GM12878 (cell line): ENCODE measurements at regions of chr5 and their contacts with region 1.

Region 1: GRCh38 chr5:151126199-151126645 is 31.4 kb downstream of the ANXA6 start:
- DNase-seq: peak; percentile 66
- ATAC-seq: peak; percentile 65
- H3K4me3 ChIP-seq: no peak overlapping the region
- H3K27ac ChIP-seq: peak overlapping the region; percentile 75
- H3K4me1 ChIP-seq: peaks cover 65% of the 10 kb centered on the region
- H3K27me3 ChIP-seq: no peaks in the 10 kb centered on the region
- CTCF ChIP-seq: peak; percentile 84 to 92 (median 87)
- EP300 ChIP-seq: no peak
- POLR2A ChIP-seq: peak; percentile 50; the same call in 1 of the 2 replicates
- RAD21 ChIP-seq: peak; percentile 93

Region 2: GRCh38 chr5:151051066-151051930 is 74.9 kb before region 1 on chr5:
- CTCF ChIA-PET with region 1: interaction called, 691 read pairs
- POLR2A ChIA-PET with region 1: interaction called, 8 read pairs
- RAD21 ChIA-PET with region 1: interaction called, 23 read pairs
- SMC1A ChIA-PET with region 1: interaction called, 42 read pairs
- in situ Hi-C with region 1: loop called (anchors 5 kb)
- intact Hi-C with region 1: no loop called
- DNase-seq: peak; percentile 43
- ATAC-seq: peak; percentile 93
- H3K4me3 ChIP-seq: no peak overlapping the region
- H3K27ac ChIP-seq: no peak overlapping the region
- H3K4me1 ChIP-seq: no peaks in the 10 kb centered on the region; the same call in 1 of the 2 replicates
- H3K27me3 ChIP-seq: no peaks in the 10 kb centered on the region
- CTCF ChIP-seq: peak; percentile 86 to 87 (median 86)
- EP300 ChIP-seq: no peak
- POLR2A ChIP-seq: no peak
- RAD21 ChIP-seq: peak; percentile 91

Region 3: GRCh38 chr5:151086905-151087360 is 39.3 kb before region 1 on chr5:
- CTCF ChIA-PET with region 1: interaction called, 17 read pairs
- POLR2A ChIA-PET with region 1: interaction called, 30 read pairs
- RAD21 ChIA-PET with region 1: interaction called, 11 read pairs
- SMC1A ChIA-PET with region 1: interaction called, 16 read pairs
- in situ Hi-C with region 1: no loop called
- intact Hi-C with region 1: no loop called
- DNase-seq: no peak
- ATAC-seq: peak; percentile 79
- H3K4me3 ChIP-seq: peak overlapping the region; percentile 89
- H3K27ac ChIP-seq: peak overlapping the region; percentile 88
- H3K4me1 ChIP-seq: peaks cover 29% of the 10 kb centered on the region
- H3K27me3 ChIP-seq: no peaks in the 10 kb centered on the region
- CTCF ChIP-seq: no peak
- EP300 ChIP-seq: no peak
- POLR2A ChIP-seq: peak; percentile 89
- RAD21 ChIP-seq: no peak

Region 4: GRCh38 chr5:151150471-151151262 is 24.4 kb after region 1 on chr5:
- CTCF ChIA-PET with region 1: interaction called, 1,107 read pairs
- POLR2A ChIA-PET with region 1: interaction called, 153 read pairs
- RAD21 ChIA-PET with region 1: interaction called, 222 read pairs
- SMC1A ChIA-PET with region 1: interaction called, 1,132 read pairs
- in situ Hi-C with region 1: no loop called
- intact Hi-C with region 1: no loop called
- DNase-seq: peak; percentile 50
- ATAC-seq: peak; percentile 51
- H3K4me3 ChIP-seq: peak overlapping the region; percentile 57
- H3K27ac ChIP-seq: peak overlapping the region; percentile 89
- H3K4me1 ChIP-seq: peaks cover 62% of the 10 kb centered on the region
- H3K27me3 ChIP-seq: no peaks in the 10 kb centered on the region
- CTCF ChIP-seq: no peak
- EP300 ChIP-seq: no peak
- POLR2A ChIP-seq: peak; percentile 70
- RAD21 ChIP-seq: no peak

Region 5: GRCh38 chr5:151223469-151224264 is 97.4 kb after region 1 on chr5 and contains the start of gene CCDC69:
- CTCF ChIA-PET with region 1: interaction called, 30 read pairs
- POLR2A ChIA-PET with region 1: interaction called, 5 read pairs
- RAD21 ChIA-PET with region 1: interaction called, 30 read pairs
- SMC1A ChIA-PET with region 1: interaction called, 60 read pairs
- in situ Hi-C with region 1: no loop called
- intact Hi-C with region 1: no loop called
- DNase-seq: no peak
- ATAC-seq: peak; percentile 82
- H3K4me3 ChIP-seq: peak within 1 kb of the TSS; percentile 97
- H3K27ac ChIP-seq: peak within 1 kb of the TSS; percentile 89
- H3K4me1 ChIP-seq: peaks cover 24% of the 10 kb centered on the region
- H3K27me3 ChIP-seq: no peaks in the 10 kb centered on the region
- CTCF ChIP-seq: no peak
- EP300 ChIP-seq: no peak
- POLR2A ChIP-seq: peak; percentile 80
- RAD21 ChIP-seq: 0 out of 2 replicates have a peak, but pooled peaks have one; percentile 16
- polyA plus RNA-seq, gene CCDC69: 13.5 to 21.4 TPM

Region 6: DNA sequence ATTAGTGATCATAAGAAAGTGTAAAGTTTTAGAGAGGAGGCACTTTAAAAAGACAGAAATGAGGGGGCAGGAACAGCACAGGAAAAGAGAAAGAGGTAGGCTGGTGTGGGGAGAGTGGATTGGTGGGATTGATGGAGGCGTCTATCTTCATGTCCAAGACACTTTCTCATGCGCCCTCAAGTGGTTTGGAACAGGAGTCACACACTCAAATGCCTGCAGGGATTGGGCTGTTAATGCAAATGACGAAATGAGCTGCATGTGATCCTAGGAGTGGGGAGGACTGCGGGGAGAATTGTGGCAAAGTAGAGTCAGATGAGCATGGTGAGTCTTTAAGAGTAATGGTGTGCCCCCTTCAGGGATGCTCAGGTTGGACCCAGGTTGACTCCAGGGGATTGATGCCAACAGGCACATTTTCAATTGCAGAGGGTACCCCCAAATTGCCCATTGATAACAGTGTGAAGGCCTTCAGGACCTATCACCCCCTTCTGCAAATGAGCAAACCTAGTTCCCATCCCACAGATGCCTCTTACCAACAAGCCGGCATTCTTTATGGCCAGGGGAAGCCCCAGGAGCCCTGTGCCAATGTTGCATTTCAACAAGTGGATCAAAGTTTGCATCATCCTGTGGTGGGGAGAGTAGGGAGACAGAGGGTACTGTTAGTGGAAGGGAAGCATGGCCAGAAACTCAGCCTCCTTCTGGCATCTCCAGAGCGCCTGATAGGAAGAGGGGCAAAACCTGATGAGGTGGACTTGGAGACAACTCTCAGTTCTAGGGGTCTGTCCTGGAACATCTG is 172.0 kb after region 1 on chr5:
- CTCF ChIA-PET with region 1: interaction called, 24 read pairs
- POLR2A ChIA-PET with region 1: no interaction called
- RAD21 ChIA-PET with region 1: interaction called, 19 read pairs
- SMC1A ChIA-PET with region 1: interaction called, 5 read pairs
- in situ Hi-C with region 1: no loop called
- intact Hi-C with region 1: loop called (anchors 5 kb)
- DNase-seq: peak; percentile 26
- ATAC-seq: peak; percentile 98
- H3K4me3 ChIP-seq: no peak overlapping the region
- H3K27ac ChIP-seq: no peak overlapping the region
- H3K4me1 ChIP-seq: no peaks in the 10 kb centered on the region
- H3K27me3 ChIP-seq: no peaks in the 10 kb centered on the region; a peak in 1 of 4 replicates
- CTCF ChIP-seq: peak; percentile 72 to 82 (median 75)
- EP300 ChIP-seq: no peak
- POLR2A ChIP-seq: no peak
- RAD21 ChIP-seq: peak; percentile 83